ENCODE measurements at regions of chr6 and their contacts with region 1.

Region 1: GRCh38 chr6:26537846-26538571 is at the start of gene HMGN4:
- DNase-seq: peak; percentile 89
- H3K4me3 Mint-ChIP-seq: peak within 1 kb of the TSS; percentile 84
- H3K27ac Mint-ChIP-seq: peak within 1 kb of the TSS; percentile 98
- H3K4me1 Mint-ChIP-seq: peaks cover 23% of the 10 kb centered on the region
- H3K27me3 Mint-ChIP-seq: no peaks in the 10 kb centered on the region
- CTCF ChIP-seq: no peak
- total RNA-seq, gene HMGN4: 71.7 and 75.4 TPM in 2 replicates

Region 2: DNA sequence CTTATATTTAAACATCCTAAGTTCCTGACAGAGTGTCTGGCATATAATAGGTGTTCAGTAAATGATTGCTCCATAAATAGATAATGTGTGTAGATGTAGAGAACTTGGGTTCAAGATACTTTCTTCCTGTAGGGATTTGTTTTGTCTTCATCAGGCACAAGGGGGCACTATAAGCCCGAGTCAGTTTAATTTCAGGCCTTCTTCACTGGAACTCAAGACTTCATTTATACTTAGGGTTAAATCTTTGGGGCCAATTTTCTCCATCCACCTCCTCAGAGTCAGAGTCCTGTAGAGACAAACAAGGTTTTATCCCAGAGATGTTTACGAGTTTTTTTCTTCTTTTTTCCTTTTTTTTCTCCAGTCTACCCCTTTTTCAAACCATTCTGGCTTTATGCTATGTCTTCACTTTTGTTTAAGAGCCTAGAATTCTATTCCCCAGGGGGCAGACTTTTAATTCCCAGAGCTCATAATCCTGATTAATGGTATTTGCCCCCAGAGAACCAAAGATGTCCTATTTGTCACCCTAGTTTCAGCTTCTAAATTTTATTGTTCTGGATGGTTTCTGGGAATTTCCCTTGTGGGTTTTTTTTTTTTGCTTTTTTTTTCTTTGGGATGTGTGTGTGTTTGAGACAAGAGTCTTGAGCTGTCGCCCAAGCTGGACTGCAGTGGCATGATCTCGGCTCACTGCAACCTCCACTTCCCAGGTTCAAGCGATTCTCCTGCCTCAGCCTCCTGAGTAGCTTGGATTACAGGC is 362.4 kb before region 1 on chr6:
- CTCF ChIA-PET with region 1: no interaction called
- POLR2A ChIA-PET with region 1: interaction called, 3 read pairs
- intact Hi-C with region 1: loop called (anchors 10 kb)
- DNase-seq: peak; percentile 82
- H3K4me3 Mint-ChIP-seq: peak overlapping the region; percentile 23
- H3K27ac Mint-ChIP-seq: peak overlapping the region; percentile 70
- H3K4me1 Mint-ChIP-seq: peaks cover 28% of the 10 kb centered on the region
- H3K27me3 Mint-ChIP-seq: no peaks in the 10 kb centered on the region
- CTCF ChIP-seq: peak; percentile 70

Region 3: DNA sequence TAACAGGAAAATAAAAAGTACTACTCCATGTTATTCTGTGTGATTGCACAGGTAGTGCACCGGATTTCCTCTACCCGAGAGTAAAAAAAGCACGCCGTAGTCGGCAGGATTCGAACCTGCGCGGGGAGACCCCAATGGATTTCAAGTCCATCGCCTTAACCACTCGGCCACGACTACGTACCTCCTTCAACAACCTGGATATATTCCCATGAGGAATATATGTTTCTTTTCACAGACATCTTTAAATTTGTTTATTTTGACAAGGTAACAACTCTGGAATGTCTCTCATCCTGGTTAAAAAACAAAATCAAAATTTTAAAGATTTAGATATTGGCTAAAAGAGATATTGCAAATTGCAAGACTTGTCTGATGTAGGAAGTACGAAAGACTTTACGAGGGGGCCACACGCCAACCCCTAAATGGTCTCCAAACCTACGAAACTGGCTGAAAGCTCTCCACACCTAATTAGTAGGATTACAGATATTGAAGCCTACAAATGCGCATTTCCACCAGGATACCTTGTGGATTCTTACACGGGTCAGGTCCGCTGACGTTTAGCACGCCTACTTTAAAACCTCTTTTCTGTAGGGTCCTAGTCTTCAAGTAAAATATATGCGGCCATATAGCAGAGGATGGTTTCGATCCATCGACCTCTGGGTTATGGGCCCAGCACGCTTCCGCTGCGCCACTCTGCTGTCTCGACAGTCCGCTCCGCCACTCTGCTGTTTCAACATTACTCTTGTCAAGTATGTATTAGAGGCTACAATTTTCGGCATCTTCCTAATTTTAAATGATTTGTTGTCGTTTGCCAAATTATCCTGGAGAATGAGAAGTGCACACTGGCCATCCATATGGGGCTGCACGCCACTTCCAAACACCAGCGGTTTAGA is 225.3 kb before region 1 on chr6:
- CTCF ChIA-PET with region 1: interaction called, 4 read pairs
- POLR2A ChIA-PET with region 1: interaction called, 12 read pairs
- intact Hi-C with region 1: no loop called
- DNase-seq: peak; percentile 82
- H3K4me3 Mint-ChIP-seq: peak overlapping the region; percentile 79
- H3K27ac Mint-ChIP-seq: peak overlapping the region; percentile 74
- H3K4me1 Mint-ChIP-seq: peaks cover 26% of the 10 kb centered on the region
- H3K27me3 Mint-ChIP-seq: no peaks in the 10 kb centered on the region
- CTCF ChIP-seq: no peak

Region 4: GRCh38 chr6:26329763-26330511 is 208.1 kb before region 1 on chr6:
- CTCF ChIA-PET with region 1: interaction called, 3 read pairs
- POLR2A ChIA-PET with region 1: interaction called, 16 read pairs
- intact Hi-C with region 1: no loop called
- DNase-seq: peak; percentile 73
- H3K4me3 Mint-ChIP-seq: peak overlapping the region; percentile 75
- H3K27ac Mint-ChIP-seq: peak overlapping the region; percentile 63
- H3K4me1 Mint-ChIP-seq: peaks cover 12% of the 10 kb centered on the region
- H3K27me3 Mint-ChIP-seq: no peaks in the 10 kb centered on the region
- CTCF ChIP-seq: no peak

Region 5: GRCh38 chr6:26439657-26440056 is 98.4 kb before region 1 on chr6:
- CTCF ChIA-PET with region 1: no interaction called
- POLR2A ChIA-PET with region 1: no interaction called
- intact Hi-C with region 1: loop called (anchors 1 kb)
- DNase-seq: no peak
- H3K4me3 Mint-ChIP-seq: peak overlapping the region; percentile 85
- H3K27ac Mint-ChIP-seq: peak overlapping the region; percentile 89
- H3K4me1 Mint-ChIP-seq: peaks cover 15% of the 10 kb centered on the region
- H3K27me3 Mint-ChIP-seq: no peaks in the 10 kb centered on the region
- CTCF ChIP-seq: no peak

Region 6: DNA sequence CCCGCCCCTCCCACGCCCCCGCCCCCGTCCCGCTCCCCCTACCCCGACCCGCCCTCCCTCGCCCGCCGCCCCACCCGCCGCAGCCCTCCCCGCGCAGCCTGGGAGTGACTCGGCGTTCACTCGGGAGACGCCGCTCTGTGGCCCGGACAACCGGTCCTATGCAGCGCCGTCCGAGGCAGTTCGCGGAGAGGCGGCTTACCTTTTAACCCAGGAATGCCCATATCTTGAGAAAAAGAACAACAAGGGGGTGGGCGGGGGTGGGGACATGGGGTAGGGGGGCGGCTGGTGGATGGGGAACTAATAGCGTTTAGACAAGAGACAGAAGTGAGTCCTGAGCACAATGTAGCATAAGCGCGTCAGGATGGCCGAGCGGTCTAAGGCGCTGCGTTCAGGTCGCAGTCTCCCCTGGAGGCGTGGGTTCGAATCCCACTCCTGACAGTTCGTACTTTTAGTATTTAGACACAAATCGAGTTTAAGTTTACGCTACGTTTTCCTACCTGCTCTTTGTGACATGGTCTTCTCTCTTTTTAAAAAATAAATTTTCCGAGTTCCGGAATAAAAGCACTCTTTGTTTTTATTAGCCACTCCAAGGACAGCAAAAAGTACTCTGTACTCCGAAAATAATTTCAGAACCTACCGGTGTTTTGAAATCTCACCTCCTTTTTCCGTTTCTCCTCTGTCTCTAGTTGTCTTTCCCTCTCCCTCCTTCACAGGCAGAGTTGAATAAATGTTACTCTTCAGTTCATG is 17.0 kb before region 1 on chr6:
- CTCF ChIA-PET with region 1: interaction called, 4 read pairs
- POLR2A ChIA-PET with region 1: interaction called, 45 read pairs
- intact Hi-C with region 1: loop called (anchors 1 kb)
- DNase-seq: peak; percentile 82
- H3K4me3 Mint-ChIP-seq: peak overlapping the region; percentile 66
- H3K27ac Mint-ChIP-seq: peak overlapping the region; percentile 17
- H3K4me1 Mint-ChIP-seq: peaks cover 9% of the 10 kb centered on the region
- H3K27me3 Mint-ChIP-seq: no peaks in the 10 kb centered on the region
- CTCF ChIP-seq: no peak

Region 7: DNA sequence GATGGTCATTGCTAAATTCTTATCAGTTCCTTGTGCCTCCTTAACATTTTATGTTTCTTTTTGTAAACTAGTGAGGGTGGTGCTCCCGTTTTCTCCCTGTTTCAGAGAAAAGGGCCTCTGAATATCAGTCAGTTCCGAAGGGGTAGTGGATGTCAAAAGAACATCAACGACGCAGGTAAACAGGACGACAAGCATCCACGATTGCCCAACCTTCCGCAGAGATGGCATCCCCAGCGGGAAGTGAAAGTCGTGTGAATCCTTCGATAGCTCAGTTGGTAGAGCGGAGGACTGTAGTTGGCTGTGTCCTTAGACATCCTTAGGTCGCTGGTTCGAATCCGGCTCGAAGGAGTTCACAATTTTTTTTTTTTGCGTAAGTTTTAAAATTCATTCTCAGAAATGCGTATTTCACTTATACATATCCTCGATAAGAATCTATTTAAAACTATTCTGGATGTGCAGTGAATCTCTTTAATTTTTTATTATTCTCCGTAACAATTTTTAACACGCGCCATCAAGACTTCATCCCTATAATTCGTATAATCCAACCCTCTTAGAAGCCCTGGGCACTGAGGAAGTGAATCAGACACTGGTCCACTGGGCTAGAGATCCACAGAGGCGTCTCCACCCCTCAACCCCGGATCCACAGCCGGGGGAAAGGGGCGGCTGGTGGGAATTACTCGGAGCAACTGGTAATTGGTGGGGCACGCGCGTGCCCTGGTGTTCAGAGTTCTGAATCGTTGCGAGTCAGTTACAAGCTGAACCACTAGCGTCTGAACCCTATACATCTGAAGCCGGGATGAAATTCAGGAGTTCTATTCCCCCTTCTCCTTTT is 30.8 kb after region 1 on chr6:
- CTCF ChIA-PET with region 1: no interaction called
- POLR2A ChIA-PET with region 1: interaction called, 21 read pairs
- intact Hi-C with region 1: loop called (anchors 1 kb)
- DNase-seq: peak; percentile 96
- H3K4me3 Mint-ChIP-seq: peak overlapping the region; percentile 85
- H3K27ac Mint-ChIP-seq: peak overlapping the region; percentile 76
- H3K4me1 Mint-ChIP-seq: peaks cover 6% of the 10 kb centered on the region
- H3K27me3 Mint-ChIP-seq: no peaks in the 10 kb centered on the region
- CTCF ChIP-seq: no peak

Region 8: GRCh38 chr6:27728442-27728841 is 1190.4 kb after region 1 on chr6:
- CTCF ChIA-PET with region 1: no interaction called
- POLR2A ChIA-PET with region 1: no interaction called
- intact Hi-C with region 1: no loop called
- DNase-seq: no peak
- H3K4me3 Mint-ChIP-seq: no peak overlapping the region
- H3K27ac Mint-ChIP-seq: no peak overlapping the region
- H3K4me1 Mint-ChIP-seq: peaks cover 4% of the 10 kb centered on the region
- H3K27me3 Mint-ChIP-seq: peaks cover 17% of the 10 kb centered on the region
- CTCF ChIP-seq: no peak